OCI-LY7 (cell line): ENCODE measurements at regions of chr17 and their contacts with region 1.

Region 1: DNA sequence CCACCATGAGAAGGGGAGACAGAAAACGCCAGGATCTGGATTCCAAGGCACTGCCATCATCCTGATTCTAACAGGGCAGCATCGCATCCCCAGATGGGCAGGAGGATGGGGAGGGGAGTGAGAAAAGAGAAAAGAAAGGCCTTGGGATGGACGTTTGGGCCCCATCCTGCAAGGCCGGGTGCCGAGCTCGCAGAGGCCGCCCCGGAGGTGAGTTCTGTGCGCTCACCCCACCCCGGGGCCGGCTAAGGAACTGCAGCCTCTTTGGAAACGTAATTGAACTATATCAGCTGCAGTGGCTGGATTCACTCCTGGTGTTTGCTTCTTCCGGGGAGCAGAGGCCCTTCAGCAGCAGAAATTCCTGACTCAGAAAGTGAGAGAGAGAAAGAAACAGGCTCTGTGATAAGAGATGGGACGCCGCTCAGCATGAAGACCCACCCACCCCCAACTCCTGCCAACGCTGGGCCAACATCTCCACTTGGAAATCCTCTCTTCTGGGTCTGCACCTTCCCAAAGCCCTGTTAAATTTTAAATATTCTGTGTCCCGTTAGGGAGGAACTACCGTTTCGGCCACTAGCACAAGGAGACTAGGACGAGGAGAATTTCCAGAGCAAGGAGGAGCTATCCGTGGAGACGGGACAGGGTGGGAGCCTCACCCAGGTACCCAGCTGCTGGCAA is 8.5 kb upstream of the SSTR2 start:
- DNase-seq: peak; percentile 69
- H3K4me3 ChIP-seq: no peak overlapping the region
- H3K27ac ChIP-seq: no peak overlapping the region
- H3K4me1 ChIP-seq: peaks cover 23% of the 10 kb centered on the region
- CTCF ChIP-seq: peak; percentile 82

Region 2: GRCh38 chr17:72556944-72557826 is 599.1 kb before region 1 on chr17:
- CTCF ChIA-PET with region 1: no interaction called
- POLR2A ChIA-PET with region 1: no interaction called
- intact Hi-C with region 1: loop called (anchors 10 kb)
- DNase-seq: peak; percentile 74
- H3K4me3 ChIP-seq: no peak overlapping the region
- H3K27ac ChIP-seq: no peak overlapping the region
- H3K4me1 ChIP-seq: no peaks in the 10 kb centered on the region
- CTCF ChIP-seq: peak; percentile 97

Region 3: GRCh38 chr17:72743037-72743467 is 413.3 kb before region 1 on chr17:
- CTCF ChIA-PET with region 1: interaction called, 12 read pairs
- POLR2A ChIA-PET with region 1: no interaction called
- intact Hi-C with region 1: no loop called
- DNase-seq: no peak
- H3K4me3 ChIP-seq: no peak overlapping the region
- H3K27ac ChIP-seq: no peak overlapping the region
- H3K4me1 ChIP-seq: no peaks in the 10 kb centered on the region
- CTCF ChIP-seq: no peak

Region 4: GRCh38 chr17:72788950-72789585 is 367.2 kb before region 1 on chr17:
- CTCF ChIA-PET with region 1: no interaction called
- POLR2A ChIA-PET with region 1: no interaction called
- intact Hi-C with region 1: no loop called
- DNase-seq: no peak
- H3K4me3 ChIP-seq: no peak overlapping the region
- H3K27ac ChIP-seq: no peak overlapping the region
- H3K4me1 ChIP-seq: no peaks in the 10 kb centered on the region
- CTCF ChIP-seq: no peak

Region 5: DNA sequence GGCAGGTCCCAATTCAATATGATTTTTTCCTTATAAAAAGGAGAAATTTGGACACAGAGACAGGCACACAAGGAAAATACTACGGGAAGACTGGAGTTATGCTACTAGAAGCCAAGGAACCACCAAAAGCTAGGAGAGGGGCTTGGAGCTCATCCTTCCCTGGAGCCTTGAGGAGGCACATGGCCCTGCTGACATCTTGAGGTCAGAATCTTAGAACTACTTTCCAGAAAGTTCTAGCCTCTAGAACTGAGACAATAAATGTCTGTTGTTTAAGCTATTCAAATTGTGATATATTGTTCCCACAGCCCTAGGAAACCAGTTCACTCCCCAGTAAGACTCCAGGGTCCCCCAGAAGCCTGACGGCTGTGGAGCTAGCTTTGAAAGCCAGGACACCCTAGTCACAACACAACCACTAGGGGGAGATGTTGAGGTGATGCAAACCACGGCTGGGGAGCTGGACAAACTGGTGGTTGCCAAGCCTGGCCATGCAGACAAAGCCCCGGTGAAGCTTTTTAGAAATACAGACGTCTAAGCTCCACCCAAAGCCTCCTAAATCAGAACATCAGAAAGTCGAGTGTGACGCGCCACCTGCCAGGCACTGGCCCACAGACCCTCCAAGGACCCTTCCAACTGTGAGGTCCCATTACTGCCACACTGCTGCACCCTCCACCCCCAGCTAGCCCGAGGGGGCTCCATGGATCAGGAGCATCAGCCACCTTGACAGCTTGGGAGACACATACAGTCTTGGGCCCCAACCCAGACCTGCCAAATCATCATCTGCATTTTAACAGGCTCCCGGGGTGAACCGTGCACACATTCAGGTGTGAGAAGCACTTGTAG is 170.2 kb before region 1 on chr17:
- CTCF ChIA-PET with region 1: interaction called, 9 read pairs
- POLR2A ChIA-PET with region 1: interaction called, 3 read pairs
- intact Hi-C with region 1: loop called (anchors 1 kb)
- DNase-seq: peak; percentile 81
- H3K4me3 ChIP-seq: no peak overlapping the region
- H3K27ac ChIP-seq: no peak overlapping the region
- H3K4me1 ChIP-seq: no peaks in the 10 kb centered on the region
- CTCF ChIP-seq: peak; percentile 100

Region 6: GRCh38 chr17:73092523-73093135 is 63.7 kb before region 1 on chr17 and contains the start of gene SLC39A11:
- CTCF ChIA-PET with region 1: no interaction called
- POLR2A ChIA-PET with region 1: no interaction called
- intact Hi-C with region 1: no loop called
- DNase-seq: peak; percentile 97
- H3K4me3 ChIP-seq: peak within 1 kb of the TSS; percentile 83
- H3K27ac ChIP-seq: no peak within 1 kb of the TSS
- H3K4me1 ChIP-seq: peaks cover 24% of the 10 kb centered on the region
- CTCF ChIP-seq: no peak
- total RNA-seq, gene SLC39A11: 22.7 and 25.6 TPM in 2 replicates

Region 7: DNA sequence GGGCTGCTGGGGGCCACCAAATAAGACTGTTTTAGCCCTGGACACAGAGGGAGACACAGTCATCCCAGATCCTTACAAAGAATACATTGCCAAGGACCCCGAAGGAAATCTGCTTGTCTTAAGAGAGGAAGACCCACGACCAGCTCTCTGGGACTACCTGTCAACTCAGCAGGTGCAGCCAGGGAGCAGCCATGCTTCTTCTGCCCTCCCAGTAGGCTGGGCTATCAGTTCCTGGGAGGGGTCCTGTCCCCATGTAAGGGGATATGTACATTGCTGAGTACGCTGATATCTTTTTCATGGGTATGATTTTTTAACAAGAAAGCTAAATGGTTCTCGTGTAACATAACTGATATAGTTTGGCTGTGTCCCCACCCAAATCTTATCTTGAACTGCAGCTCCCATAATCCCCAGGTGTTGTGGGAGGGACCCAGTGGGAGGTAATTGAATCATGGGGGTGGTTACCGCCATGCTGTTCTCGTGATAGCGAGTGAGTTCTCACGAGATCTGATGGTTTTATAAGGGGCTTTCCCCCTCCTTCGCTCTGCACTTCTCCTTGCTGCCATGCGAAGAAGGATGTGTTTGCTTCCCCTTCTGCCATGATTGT is 19.8 kb after region 1 on chr17:
- CTCF ChIA-PET with region 1: interaction called, 12 read pairs
- POLR2A ChIA-PET with region 1: interaction called, 3 read pairs
- intact Hi-C with region 1: no loop called
- DNase-seq: no peak
- H3K4me3 ChIP-seq: no peak overlapping the region
- H3K27ac ChIP-seq: no peak overlapping the region
- H3K4me1 ChIP-seq: no peaks in the 10 kb centered on the region
- CTCF ChIP-seq: no peak